ENCODE measurements at regions of chr1 and their contacts with region 1.

Region 1: GRCh38 chr1:227225715-227226346 is 92.5 kb downstream of the CDC42BPA start:
- DNase-seq: no peak
- ATAC-seq: no peak

Region 2: GRCh38 chr1:227131193-227131592 is 94.6 kb before region 1 on chr1:
- intact Hi-C with region 1: loop called (anchors 10 kb)
- DNase-seq: no peak
- ATAC-seq: peak; percentile 28

Region 3: DNA sequence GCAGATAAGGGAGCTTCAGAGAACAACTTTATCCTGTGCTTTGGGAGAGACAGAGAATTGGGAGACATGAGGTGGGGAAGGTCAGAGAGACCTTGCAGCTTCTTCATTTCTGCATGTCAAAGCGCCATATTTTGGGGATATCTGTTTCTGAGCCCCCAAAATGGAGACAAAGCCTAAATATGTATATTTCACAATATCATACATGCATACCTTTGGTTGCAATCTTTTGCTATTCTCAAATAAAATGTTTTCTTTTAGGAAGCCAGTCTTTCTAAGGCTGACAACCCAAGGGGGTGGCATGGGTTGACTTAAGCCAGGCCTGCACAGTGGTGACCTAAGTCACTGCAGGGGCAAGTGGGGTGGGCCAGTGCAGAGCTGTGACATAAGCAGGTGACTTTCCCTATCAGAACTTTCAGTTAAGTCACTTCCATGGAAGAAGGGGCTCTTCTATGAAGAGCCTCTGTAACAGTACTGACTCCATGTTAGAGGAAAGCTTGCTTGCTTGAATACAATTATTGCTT is 897.1 kb after region 1 on chr1:
- intact Hi-C with region 1: no loop called
- DNase-seq: no peak
- ATAC-seq: no peak